Activated CD4-positive, alpha-beta T cell treated with anti-CD3 and anti-CD28 coated beads for 36 hours (primary cell): ENCODE measurements at regions of chr15 and their contacts with region 1.

Region 1: GRCh38 chr15:64387562-64388168 is at the start of gene TRIP4:
- DNase-seq: peak; percentile 98
- ATAC-seq: peak; percentile 100
- H3K4me3 Mint-ChIP-seq: peak within 1 kb of the TSS; percentile 85
- H3K27ac Mint-ChIP-seq: peak within 1 kb of the TSS; percentile 91
- H3K4me1 Mint-ChIP-seq: peaks cover 17% of the 10 kb centered on the region
- H3K27me3 Mint-ChIP-seq: no peaks in the 10 kb centered on the region
- total RNA-seq, gene TRIP4: 13.1 to 19.6 TPM

Region 2: DNA sequence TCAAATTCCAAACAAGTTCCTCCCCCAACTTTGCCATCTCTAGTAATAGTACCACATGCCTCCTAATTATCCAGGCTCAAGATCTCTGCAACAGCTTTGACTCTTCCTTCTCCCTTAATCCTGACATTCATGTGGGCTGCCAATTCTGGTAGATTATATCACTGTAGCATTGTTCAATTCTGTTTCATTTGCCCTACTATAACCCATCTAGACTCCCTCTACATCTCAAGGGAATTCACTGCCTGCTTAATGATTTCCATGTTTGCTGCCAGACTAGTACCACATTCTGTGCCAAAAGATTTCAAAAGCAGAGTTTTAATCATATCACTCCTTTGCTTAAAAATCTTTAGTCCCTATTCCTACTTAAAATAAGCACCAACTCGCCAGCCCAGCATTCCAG is 190.2 kb before region 1 on chr15:
- CTCF ChIA-PET with region 1: no interaction called
- POLR2A ChIA-PET with region 1: no interaction called
- intact Hi-C with region 1: no loop called
- DNase-seq: no peak
- ATAC-seq: no peak
- H3K4me3 Mint-ChIP-seq: no peak overlapping the region
- H3K27ac Mint-ChIP-seq: no peak overlapping the region
- H3K4me1 Mint-ChIP-seq: no peaks in the 10 kb centered on the region
- H3K27me3 Mint-ChIP-seq: no peaks in the 10 kb centered on the region

Region 3: DNA sequence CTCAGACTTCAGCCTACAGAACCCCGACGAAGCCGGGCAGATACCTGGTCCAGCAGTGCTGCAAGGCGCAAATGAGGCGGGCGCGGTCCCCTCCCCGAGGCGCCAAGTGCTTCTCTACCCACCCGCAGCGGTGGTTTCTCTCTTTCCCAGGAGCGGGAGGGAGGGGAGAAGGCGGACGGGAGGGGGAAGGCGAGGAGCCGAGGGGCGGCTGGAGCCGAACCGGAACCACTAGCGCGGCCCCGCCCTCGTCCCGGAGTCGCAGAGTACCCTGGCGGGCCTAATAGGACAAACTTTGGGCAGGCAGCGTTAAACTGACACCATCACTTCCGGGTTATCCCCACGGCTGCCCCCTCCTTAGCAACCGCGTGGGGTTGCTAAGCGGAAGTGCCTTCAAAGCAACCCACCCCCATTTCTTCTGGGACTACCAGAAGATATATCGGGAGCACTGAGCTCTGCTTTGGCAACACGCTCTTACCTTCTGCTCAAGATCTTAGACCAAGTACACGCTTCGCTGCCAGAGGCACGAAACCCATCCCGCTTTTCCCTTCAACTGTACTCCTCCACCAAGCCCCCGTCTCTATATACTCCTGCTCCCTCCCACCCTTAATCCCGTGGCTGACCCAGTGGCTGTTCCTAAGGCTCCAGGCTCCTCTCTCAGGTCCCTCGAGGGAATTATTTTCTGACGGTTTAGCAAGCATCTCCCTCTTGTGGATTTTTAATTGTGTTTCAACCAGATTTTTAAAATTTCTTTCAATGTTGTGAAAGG is 31.5 kb before region 1 on chr15 and contains the start of gene CSNK1G1:
- CTCF ChIA-PET with region 1: interaction called, 3 read pairs
- POLR2A ChIA-PET with region 1: interaction called, 3 read pairs
- intact Hi-C with region 1: loop called (anchors 1 kb)
- DNase-seq: peak; percentile 94
- ATAC-seq: peak; percentile 99
- H3K4me3 Mint-ChIP-seq: peak within 1 kb of the TSS; percentile 89
- H3K27ac Mint-ChIP-seq: peak within 1 kb of the TSS; percentile 84
- H3K4me1 Mint-ChIP-seq: peaks cover 17% of the 10 kb centered on the region
- H3K27me3 Mint-ChIP-seq: no peaks in the 10 kb centered on the region
- total RNA-seq, gene CSNK1G1: 20.3 to 22.5 TPM

Region 4: DNA sequence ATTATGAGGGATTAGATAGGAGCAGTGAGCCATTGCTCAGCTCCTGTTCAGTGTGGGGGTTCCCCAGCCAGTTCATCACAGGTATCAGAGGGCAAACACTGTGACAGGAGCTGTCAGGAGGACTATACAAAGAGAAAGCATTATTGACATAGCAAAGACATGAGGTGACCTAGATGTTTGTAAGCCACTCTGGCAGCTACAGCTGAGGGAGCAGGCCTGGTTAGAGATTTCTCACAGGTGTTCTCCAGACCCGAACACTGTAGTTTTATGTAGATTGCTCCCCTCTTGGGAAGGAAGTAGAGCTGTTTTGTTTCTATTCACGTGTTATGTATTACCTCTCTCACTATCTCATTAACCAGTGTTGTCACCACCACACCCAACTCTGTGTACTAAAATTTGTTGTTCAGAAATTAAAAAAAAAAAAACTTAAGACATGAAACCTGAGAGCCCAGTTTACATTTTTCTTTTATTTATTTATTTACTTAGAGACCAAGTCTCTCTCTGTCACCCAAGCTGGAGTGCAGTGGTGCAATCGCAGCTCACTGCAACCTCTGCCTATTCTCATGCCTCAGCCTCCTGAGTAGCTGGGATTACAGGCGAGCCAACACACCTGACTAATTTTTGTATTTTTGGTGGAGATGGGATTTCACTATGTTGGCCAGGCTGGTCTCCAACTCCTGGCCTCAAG is 264.1 kb after region 1 on chr15:
- CTCF ChIA-PET with region 1: no interaction called
- POLR2A ChIA-PET with region 1: no interaction called
- intact Hi-C with region 1: loop called in 1 of 2 experiments (anchors 1 kb)
- DNase-seq: peak; percentile 63
- ATAC-seq: peak; percentile 97
- H3K4me3 Mint-ChIP-seq: no peak overlapping the region
- H3K27ac Mint-ChIP-seq: peak overlapping the region; percentile 87
- H3K4me1 Mint-ChIP-seq: peaks cover 47% of the 10 kb centered on the region
- H3K27me3 Mint-ChIP-seq: no peaks in the 10 kb centered on the region

Region 5: GRCh38 chr15:64702816-64703646 is 315.4 kb after region 1 on chr15:
- CTCF ChIA-PET with region 1: interaction called, 4 read pairs
- POLR2A ChIA-PET with region 1: no interaction called
- intact Hi-C with region 1: loop called in 1 of 2 experiments (anchors 1 kb)
- DNase-seq: peak; percentile 98
- ATAC-seq: peak; percentile 91
- H3K4me3 Mint-ChIP-seq: peak overlapping the region; percentile 72
- H3K27ac Mint-ChIP-seq: peak overlapping the region; percentile 86
- H3K4me1 Mint-ChIP-seq: peaks cover 52% of the 10 kb centered on the region
- H3K27me3 Mint-ChIP-seq: no peaks in the 10 kb centered on the region

Region 6: GRCh38 chr15:64836023-64836536 is 448.4 kb after region 1 on chr15:
- CTCF ChIA-PET with region 1: no interaction called
- POLR2A ChIA-PET with region 1: no interaction called
- intact Hi-C with region 1: loop called in 1 of 2 experiments (anchors 1 kb)
- DNase-seq: no peak
- ATAC-seq: peak; percentile 4
- H3K4me3 Mint-ChIP-seq: peak overlapping the region; percentile 56
- H3K27ac Mint-ChIP-seq: peak overlapping the region; percentile 30
- H3K4me1 Mint-ChIP-seq: peaks cover 43% of the 10 kb centered on the region
- H3K27me3 Mint-ChIP-seq: no peaks in the 10 kb centered on the region

Region 7: DNA sequence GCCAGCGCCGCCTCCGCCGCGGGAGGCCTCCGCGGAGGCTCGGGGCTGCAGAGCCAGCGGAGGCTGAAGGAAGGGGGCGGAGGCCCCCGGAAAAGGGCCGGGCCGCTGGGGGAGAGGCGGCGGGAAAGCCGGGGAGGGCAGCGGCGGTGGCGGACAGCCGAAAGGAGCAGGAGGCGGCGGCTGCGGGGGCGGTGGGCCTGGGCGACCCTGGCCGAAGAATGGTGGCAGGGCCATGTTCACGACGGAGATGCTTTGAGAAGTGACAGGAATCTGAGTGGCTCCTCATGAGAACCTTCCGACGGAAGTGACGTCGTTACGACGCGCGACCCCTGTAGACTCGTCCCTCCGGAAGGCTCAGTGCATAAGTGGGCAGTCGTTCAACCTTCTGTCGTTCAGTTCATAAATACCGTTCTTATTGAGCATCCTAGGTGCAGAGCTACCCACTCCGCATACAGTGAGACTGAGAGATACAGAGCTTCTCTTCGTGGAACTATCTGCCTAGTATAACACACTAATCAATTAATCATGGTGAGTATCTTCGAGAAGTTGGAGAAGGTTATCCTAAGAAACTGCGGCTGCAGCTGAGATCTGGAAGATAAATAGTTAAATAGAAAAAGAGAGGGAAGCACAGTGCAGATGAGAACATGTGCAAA is 746.0 kb after region 1 on chr15 and contains the start of gene PDCD7:
- CTCF ChIA-PET with region 1: no interaction called
- POLR2A ChIA-PET with region 1: no interaction called
- intact Hi-C with region 1: loop called in 1 of 2 experiments (anchors 10 kb)
- DNase-seq: peak; percentile 91
- ATAC-seq: peak; percentile 96
- H3K4me3 Mint-ChIP-seq: peak within 1 kb of the TSS; percentile 85
- H3K27ac Mint-ChIP-seq: peak within 1 kb of the TSS; percentile 93
- H3K4me1 Mint-ChIP-seq: peaks cover 26% of the 10 kb centered on the region
- H3K27me3 Mint-ChIP-seq: no peaks in the 10 kb centered on the region
- total RNA-seq, gene PDCD7: 16.6 to 24.8 TPM

Region 8: DNA sequence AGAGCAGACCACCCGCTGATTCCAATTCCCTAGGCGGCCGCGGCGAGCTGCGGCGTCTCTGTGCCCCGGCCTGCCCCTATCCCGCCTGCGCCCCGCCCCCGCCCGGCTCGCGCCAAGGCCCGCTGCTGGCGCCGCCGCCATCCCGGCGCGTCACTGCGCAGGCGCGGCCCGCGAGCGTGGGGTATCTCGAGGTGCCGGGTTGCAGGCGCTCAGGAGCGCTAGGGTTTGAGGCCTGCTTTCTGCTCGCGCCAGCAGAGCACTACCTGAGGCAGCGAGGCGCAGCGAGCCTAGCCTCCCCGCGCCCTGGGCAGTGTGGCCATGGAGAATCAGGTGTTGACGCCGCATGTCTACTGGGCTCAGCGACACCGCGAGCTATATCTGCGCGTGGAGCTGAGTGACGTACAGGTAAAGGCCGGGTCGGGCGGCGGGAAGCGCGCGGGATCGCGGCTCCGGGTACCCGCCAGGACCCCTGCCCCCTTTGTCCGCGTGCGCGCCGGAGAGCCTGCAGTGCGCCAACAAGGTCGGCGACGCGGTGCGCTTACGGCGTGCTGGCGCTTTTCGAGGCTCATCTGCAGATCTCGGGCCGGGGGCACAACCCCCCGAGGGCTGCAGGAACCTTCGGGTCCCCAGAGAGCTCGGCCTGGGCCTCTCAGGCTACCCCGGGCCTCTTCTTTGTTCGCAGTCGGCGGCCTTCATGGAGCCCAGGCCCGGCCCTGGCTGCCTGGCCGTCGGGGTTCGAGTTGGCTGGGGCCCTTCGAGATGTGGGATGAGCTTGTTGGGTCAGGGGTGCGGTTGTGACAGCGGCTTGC is 1142.9 kb after region 1 on chr15 and contains the start of gene HACD3:
- CTCF ChIA-PET with region 1: no interaction called
- POLR2A ChIA-PET with region 1: no interaction called
- intact Hi-C with region 1: no loop called
- DNase-seq: peak; percentile 95
- ATAC-seq: peak; percentile 93
- H3K4me3 Mint-ChIP-seq: peak within 1 kb of the TSS; percentile 78
- H3K27ac Mint-ChIP-seq: peak within 1 kb of the TSS; percentile 91
- H3K4me1 Mint-ChIP-seq: peaks cover 32% of the 10 kb centered on the region
- H3K27me3 Mint-ChIP-seq: no peaks in the 10 kb centered on the region
- total RNA-seq, gene HACD3: 23.4 to 27.3 TPM